ENCODE measurements at regions of chr19 and their contacts with region 1.

Region 1: DNA sequence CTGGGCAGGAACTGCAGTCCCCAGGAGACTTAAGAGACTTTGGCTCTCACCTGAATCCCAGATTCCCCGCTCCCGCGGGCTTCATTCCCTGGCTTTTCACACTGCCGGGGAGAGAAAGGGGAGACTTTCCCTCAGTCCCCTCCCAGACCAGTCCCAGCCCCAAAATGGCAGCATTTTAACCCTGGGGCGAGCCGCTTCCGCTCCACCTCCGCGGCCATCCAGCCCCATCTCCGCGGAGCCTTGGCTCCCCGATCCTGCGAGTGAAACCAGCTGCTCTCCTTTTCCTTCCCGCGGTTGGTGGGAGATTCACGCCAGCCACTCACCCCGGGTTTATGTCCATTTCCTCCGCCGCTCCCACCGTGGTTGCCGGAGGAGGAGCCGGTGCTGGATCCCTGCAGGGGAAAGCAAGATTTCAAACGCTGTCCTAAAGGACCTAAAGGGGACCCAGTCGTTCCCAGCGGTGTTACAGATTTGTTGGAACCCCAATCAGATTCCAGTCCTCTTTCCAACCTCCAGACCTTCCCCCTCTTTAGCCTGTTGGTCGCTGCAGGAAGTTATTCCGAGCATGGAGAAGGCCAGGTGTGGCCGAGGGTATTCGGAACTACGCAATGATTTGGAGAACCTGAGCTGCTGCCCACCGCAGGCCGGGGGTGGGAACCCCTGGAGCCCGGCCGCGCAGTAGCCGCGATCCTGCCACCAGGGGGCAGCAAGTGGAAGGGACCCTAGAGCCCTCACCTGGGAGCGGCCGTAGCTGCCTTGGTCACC is 3.4 kb downstream of the DMKN start:
- H3K4me3 ChIP-seq: peak overlapping the region; percentile 48
- H3K27ac ChIP-seq: peak overlapping the region; percentile 99
- H3K4me1 ChIP-seq: peaks cover 15% of the 10 kb centered on the region
- CTCF ChIP-seq: peak; percentile 100

Region 2: GRCh38 chr19:35107546-35107945 is 402.5 kb before region 1 on chr19:
- CTCF ChIA-PET with region 1: no interaction called
- POLR2A ChIA-PET with region 1: no interaction called
- H3K4me3 ChIP-seq: no peak overlapping the region
- H3K27ac ChIP-seq: no peak overlapping the region
- H3K4me1 ChIP-seq: no peaks in the 10 kb centered on the region
- CTCF ChIP-seq: no peak

Region 3: DNA sequence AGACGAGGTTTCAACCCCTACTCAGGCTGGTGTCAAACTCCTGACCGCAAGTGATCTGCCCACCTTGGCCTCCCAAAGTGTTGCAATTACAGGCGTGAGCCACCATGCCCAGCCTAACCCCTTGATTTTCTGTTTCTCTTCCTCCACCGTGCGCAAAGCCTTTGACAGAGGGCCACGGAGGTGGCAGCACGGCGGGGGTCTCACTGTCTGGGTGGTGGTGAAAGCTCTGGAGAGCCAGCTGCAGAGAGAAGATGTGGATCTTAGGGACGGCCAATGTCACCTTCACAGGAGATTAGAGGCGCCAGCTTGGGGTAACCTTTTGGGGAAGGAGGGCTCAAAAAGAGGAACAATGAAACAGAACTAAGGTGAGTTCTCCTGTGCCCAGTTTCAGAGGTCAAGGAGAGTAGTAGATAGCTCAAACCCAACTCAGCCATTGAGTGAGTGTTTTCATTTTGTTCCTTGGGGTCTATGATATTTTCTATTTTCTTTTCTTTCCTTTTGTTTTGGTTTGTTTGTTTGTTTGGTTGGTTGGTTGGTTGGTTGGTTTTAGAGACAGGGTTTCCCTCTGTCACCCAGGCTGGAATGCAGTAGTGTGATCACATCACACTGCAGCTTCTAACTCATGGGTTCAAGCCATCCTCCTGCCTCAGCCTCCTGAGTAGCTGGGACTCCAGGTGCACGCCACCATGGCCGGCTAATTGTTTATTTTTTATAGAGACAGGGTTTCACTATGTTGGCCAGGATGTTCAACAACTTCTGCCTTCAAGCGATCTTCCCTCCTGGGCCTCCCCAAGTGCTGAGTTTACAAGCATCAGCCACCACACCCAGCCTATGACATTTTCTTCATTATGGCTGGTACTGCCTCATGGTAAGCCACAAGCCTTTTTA is 101.5 kb before region 1 on chr19:
- CTCF ChIA-PET with region 1: no interaction called
- POLR2A ChIA-PET with region 1: no interaction called
- H3K4me3 ChIP-seq: no peak overlapping the region
- H3K27ac ChIP-seq: no peak overlapping the region
- H3K4me1 ChIP-seq: 0 out of 2 replicates have a peak, but pooled peaks cover 3% of the 10 kb centered on the region
- CTCF ChIP-seq: no peak

Region 4: DNA sequence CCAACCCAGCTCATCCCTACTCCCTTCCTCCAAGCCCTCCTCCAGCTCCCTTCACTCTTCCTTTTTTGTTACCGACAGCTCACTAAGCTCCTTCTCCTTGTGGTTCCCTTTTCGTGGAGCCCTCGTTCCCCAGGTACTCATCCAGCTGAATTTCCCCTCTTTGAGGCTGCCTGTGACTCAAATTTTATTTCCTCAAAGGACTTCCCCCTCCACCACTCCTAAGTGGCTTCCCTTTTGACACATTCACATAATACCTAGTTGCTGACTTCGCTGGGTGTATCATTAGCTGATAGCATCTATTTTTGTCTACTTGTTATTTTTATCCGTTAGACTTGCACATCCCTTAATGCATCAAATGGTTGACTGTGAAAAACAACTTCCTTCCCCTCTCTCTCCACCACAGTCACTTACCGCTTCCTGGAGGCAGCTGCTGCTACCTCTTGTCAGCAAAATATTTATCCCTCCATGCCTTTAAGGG is 47.5 kb before region 1 on chr19:
- CTCF ChIA-PET with region 1: interaction called, 10 read pairs
- POLR2A ChIA-PET with region 1: no interaction called
- H3K4me3 ChIP-seq: no peak overlapping the region
- H3K27ac ChIP-seq: no peak overlapping the region
- H3K4me1 ChIP-seq: no peaks in the 10 kb centered on the region
- CTCF ChIP-seq: no peak

Region 5: DNA sequence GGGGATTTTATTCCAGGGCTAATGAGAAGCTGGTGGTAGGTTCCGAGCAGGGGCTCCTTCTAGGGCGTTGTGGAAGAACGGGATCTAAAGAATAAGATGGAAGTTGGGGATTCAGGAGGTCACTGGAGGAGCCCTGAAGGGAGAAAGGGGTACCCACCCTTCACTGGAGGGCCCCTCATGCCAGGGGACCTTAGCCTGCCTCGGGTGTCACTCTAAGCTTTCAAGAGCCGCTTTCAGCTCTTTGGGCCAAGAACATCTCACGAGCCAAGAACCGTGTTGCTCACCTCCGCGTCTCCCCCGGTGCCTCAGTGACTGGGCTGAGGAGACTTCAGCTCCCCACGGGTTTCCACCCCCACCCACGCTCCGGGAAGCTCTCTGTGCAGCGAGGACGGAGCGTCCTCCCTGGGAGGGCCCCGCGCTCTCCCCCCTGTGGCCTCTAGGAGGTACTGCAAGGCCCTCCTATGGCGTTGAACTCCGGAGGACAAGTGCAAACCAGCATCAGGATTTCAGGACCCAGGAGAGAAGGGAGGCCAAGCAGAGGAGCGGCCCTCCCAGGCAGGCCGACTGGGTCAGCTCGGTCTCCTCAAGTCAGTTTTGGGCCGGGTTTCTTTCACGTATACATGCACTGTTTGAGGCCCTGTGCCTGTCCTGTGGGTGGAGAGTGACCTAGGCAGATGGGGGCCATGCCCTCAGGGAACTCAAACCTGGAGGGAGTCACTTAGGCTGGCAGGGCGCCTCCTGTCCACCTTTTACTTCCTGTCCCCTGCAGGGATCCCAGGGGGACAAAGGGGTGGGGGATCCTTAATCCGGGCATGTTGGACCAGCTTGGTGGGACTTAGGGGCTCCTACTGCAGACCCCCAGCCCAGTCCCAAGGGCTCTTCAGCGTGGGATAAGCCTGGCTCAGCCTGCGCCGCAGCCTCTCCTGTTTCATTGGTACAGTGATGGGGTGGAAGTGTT is 14.7 kb before region 1 on chr19:
- CTCF ChIA-PET with region 1: interaction called, 176 read pairs
- POLR2A ChIA-PET with region 1: interaction called, 10 read pairs
- H3K4me3 ChIP-seq: no peak overlapping the region
- H3K27ac ChIP-seq: no peak overlapping the region
- H3K4me1 ChIP-seq: no peaks in the 10 kb centered on the region
- CTCF ChIP-seq: peak; percentile 99

Region 6: DNA sequence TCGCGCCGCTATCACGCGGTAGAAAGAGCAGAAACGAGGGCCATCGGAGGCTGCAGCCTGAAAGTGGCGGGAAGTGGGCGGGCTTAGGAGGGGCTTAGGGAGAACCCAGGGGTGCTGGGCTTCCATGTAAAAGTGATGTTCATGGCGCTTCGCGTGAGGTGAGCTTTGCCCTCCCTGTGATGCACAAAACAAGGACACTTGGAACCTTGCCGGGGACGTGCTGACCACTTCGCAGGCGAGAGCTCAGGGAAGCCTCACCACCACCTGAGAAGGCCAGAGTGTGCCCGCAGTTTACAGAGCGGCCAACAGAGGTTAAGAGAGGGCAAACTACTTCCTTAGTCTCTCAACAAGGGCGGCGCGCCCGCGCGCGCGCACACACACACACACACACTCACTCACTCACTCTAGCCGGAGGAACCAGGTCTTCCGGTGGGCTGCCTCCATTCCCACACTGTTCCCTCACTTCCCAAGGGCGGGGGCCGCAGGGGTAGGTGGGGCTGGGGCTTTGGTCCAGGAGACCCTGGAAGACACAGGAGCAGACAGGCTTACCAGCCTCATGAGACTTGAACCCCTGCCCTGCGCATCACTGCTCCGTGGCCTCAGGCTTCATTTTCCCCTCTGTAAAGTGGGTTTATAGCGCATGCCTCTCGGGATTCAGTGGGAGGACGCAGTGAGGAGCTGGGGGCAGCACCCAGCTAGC is 23.9 kb after region 1 on chr19:
- CTCF ChIA-PET with region 1: interaction called, 19 read pairs
- POLR2A ChIA-PET with region 1: interaction called, 18 read pairs
- H3K4me3 ChIP-seq: no peak overlapping the region
- H3K27ac ChIP-seq: no peak overlapping the region
- H3K4me1 ChIP-seq: peaks cover 6% of the 10 kb centered on the region; the same call in 1 of the 2 replicates
- CTCF ChIP-seq: no peak

Region 7: DNA sequence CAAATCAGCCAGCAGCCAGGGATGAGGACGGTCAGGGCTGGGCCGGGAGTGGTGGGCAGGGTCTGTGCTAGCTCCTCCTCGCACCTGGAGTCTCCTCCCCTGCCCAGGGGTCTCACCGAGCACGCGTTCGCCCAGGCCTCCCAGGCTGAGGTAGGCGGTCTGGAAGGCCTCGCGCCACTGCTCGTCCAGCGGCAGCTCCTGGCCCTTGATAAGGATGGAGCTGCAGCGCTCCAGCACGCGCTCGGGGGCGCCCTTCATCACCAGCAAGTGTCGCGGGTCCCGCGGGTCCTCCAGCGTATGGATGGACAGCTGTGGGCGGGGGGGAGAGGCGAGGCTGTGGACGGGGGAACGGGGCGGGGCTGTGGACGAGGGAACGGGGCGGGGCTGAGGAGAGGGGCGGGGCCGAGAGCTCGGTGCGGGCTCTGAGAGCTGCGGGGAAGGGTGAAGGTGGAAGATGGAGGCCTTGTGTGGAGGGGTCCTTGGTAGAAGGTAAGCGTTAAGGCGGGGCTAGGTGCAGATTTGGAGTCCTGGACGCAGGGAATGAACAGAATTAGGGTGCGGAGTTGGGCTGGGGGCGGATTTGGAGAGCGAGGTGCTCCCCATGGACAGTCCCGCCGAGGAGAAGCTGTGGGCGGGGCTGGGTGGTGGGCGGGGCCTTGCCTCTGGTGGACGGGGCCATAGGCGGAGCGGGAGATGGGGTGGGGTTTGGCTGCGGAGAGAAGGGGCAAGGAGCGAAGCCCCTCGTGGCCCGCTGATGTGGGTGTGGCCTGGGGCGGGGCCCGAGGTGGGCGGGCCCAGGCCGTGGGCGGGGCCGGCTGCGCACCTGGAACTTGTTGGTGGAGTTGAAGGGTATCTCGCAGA is 47.7 kb after region 1 on chr19:
- CTCF ChIA-PET with region 1: interaction called, 17 read pairs
- POLR2A ChIA-PET with region 1: interaction called, 10 read pairs
- H3K4me3 ChIP-seq: peak overlapping the region; percentile 22
- H3K27ac ChIP-seq: no peak overlapping the region
- H3K4me1 ChIP-seq: peaks cover 10% of the 10 kb centered on the region
- CTCF ChIP-seq: no peak

Region 8: GRCh38 chr19:35648017-35648961 is 138.2 kb after region 1 on chr19 and contains the start of gene COX6B1:
- CTCF ChIA-PET with region 1: interaction called, 4 read pairs
- POLR2A ChIA-PET with region 1: interaction called, 13 read pairs
- H3K4me3 ChIP-seq: peak within 1 kb of the TSS; percentile 70
- H3K27ac ChIP-seq: peak within 1 kb of the TSS; percentile 63
- H3K4me1 ChIP-seq: peaks cover 25% of the 10 kb centered on the region
- CTCF ChIP-seq: no peak; the same call in 1 of the 2 replicates